GM13976 (cell line): ENCODE measurements at regions of chr2 and their contacts with region 1.

Region 1: DNA sequence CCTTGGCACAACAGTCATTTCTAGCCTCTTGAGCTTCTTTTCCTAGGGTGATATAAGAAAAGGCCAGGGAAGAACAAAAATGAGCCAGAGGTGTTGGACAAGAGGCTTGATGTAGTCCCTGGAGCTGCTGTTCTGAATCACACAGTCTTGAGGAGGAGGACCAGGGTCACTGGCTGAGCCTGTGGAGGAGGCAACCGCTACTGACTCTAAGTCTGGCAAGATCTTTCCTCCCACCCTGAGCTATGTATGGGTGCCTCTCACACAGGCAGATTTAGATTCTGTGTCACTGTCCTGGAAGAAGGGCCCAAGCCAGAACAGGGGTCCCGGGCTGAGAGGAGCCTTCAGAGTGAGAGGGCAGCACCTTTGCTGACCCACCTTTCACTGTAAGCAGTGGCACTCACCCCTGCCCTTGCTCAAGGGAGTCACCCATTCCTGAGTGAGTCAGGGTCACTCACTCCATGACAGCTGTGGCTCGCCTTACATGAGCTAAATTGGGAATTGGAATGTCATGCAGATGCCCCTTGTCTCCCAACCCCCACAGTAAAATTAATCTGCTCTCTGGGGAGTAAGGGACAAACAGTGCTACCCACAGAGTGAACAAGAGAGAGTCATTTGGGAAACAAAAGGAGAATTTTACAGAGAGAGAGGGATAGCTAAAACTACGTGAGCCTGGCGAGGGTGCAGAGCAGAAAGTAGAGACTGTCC is at the start of gene TRIM54:
- DNase-seq: no peak
- CTCF ChIP-seq: no peak

Region 2: DNA sequence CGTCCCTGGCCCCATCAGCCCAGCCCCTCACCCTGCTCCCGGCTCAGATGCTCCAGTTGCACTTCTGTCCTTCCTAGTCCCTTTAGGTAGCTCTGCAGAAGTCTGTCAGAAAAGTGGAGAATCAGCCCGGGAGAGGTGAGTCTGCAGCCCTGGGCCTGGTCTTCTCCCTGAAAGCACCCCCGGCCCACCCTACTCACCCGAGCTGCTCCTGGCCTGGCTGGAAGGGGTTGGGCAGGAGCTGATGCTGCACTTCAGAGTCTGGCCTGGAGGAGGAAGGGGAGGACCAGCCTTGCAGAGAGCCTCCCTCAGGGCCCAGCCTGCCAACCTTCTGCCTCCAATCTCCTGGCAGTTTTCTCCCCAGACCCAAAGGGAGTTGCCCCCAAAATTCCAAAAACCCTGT is 179.7 kb before region 1 on chr2:
- in situ Hi-C with region 1: loop called (anchors 10 kb)
- DNase-seq: no peak
- CTCF ChIP-seq: no peak